Left lung (tissue), 14 donors: ENCODE measurements at regions of chr22 and their contacts with region 1.

Region 1: GRCh38 chr22:19968450-19968891 is 26.9 kb upstream of the TXNRD2 start:
- DNase-seq: peak in 1 of 4 donors; percentile 71
- ATAC-seq: no peak
- H3K4me3 ChIP-seq: no peak overlapping the region
- H3K27ac ChIP-seq: no peak overlapping the region
- H3K4me1 ChIP-seq: peaks cover 0 to 18% of the 10 kb centered on the region in 2 donors
- H3K27me3 ChIP-seq: no peaks in the 10 kb centered on the region
- CTCF ChIP-seq: no peak

Region 2: DNA sequence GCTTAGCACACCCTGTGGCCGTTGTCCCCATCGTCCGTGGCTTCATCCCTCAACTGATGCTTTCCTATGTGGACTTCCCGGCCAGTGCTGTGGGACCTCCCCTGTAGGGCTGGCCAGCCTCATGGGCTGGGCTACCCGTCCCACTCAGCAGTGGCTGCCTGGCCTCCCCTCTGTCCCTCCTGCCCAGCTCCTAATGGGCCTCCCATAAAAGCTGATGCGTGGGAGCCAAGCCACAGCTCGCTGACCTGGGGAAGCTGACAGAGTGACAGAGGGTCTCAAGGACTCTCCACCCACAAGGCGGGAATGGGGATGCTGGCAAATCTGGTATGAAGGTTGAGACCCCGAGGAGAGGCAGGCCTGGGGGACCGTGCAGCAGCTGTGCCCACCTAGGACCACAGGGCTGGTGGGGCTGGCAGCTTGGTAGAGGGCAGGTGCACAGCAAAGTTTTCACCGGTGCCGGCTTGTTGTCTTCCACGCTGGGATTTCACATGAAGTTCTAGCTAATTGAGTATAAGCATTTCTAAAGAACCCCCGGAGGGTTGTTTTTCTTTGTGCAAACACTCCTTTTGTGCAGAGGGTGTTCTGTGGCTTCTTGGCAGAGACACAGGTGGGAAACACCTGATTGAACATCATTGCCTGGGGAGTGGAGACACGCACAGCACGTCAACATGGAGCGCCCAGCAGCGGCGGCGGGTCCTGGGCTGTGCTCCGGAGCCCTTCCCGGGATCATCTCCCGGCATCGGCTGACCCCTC is 184.7 kb before region 1 on chr22:
- intact Hi-C with region 1: no loop called
- DNase-seq: peak in 1 of 4 donors; percentile 62
- ATAC-seq: no peak
- H3K4me3 ChIP-seq: no peak overlapping the region
- H3K27ac ChIP-seq: no peak overlapping the region
- H3K4me1 ChIP-seq: no peaks in the 10 kb centered on the region
- H3K27me3 ChIP-seq: peaks cover 0 to 40% of the 10 kb centered on the region in 2 donors
- CTCF ChIP-seq: no peak

Region 3: GRCh38 chr22:19918332-19919106 is 50.0 kb before region 1 on chr22:
- intact Hi-C with region 1: no loop called
- DNase-seq: peak in 1 of 4 donors; percentile 57
- ATAC-seq: no peak
- H3K4me3 ChIP-seq: no peak overlapping the region
- H3K27ac ChIP-seq: no peak overlapping the region
- H3K4me1 ChIP-seq: no peaks in the 10 kb centered on the region
- H3K27me3 ChIP-seq: no peaks in the 10 kb centered on the region
- CTCF ChIP-seq: no peak

Region 4: DNA sequence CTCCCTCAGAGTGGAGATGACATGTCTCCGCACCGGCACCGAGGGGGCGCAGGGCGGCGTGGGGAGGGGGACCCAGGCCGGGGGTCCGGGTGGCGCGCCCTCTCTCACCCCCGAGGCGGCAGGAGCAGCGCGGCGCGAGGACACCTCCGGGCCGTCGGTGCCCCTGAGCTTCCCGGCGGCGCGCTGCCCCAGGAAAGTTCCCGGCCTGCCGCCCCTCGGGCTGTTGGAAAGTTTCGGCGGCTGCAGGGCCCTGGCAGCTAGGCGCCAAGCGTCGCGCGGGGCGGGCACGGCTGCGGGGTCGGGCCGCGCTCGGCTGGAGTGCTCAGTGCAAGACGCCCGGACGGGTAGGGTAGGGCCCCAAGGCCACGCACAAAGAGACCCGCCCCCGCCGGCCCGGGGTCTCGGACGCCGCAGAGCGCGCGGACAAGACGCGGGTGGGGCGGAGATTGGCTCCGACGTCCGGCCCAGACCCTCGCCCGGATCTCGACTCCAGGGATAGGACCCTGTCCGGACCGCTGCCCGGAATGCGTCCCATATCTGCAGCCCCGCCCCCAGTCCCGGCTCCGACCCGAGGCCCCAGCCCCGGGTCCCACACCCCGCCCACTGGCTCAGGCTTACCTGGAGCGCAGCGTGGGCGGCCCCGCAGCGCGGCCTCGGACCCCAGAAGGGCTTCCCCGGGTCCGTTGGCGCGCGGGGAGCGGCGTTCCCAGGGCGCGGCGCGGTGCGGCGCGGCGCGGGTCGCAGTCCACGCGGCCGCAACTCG is 47.7 kb after region 1 on chr22:
- intact Hi-C with region 1: loop called in 1 of 2 experiments (anchors 2 kb)
- DNase-seq: peak in 1 of 4 donors; percentile 86
- ATAC-seq: no peak
- H3K4me3 ChIP-seq: peak overlapping the region; percentile 66 to 88
- H3K27ac ChIP-seq: no peak overlapping the region
- H3K4me1 ChIP-seq: peaks cover 8 to 36% of the 10 kb centered on the region in 2 donors
- H3K27me3 ChIP-seq: peaks cover 0 to 31% of the 10 kb centered on the region in 2 donors
- CTCF ChIP-seq: no peak